ENCODE measurements at regions of chr4 and their contacts with region 1.

Region 1: DNA sequence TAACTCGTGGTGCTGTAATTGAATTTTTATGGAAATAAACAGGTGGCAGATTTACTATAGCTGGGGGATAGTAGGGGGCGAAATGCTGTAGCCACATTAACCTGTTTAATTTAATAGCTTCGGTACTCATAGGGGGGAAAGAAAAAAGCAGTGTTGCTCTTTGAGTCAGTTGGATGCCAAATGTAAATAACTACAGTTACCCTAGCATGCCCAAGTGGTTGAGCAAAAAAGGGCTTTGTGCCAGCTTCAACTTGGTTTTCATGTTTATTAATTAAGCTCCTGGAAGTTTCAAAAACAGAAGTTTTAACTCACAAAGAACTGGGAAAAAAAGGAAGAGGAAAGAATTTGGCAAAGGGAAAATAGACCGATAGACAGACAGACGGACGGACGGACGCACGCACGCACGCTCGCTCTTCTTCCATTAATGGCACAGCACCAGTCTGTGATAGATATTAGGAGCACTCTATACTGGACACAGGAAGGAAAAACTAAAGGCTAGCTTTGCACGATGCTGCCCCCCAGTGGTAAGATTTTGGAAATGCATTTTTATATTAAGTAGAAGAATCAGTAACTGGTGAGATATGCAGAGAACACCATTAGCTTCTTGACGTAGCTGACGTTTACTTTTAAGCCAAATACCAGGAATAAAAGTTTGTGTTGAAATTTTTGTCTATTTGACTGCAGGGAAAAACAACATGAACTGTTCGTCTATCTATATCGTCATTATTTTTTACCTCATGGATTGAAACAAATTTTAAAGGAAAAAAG is 151.8 kb downstream of the SLC7A11 start:
- DNase-seq: peak; percentile 45
- ATAC-seq: no peak
- H3K4me3 Mint-ChIP-seq: no peak overlapping the region
- H3K27ac Mint-ChIP-seq: no peak overlapping the region
- H3K4me1 Mint-ChIP-seq: no peaks in the 10 kb centered on the region
- H3K27me3 Mint-ChIP-seq: peaks cover 5% of the 10 kb centered on the region

Region 2: GRCh38 chr4:137124278-137124932 is 965.9 kb before region 1 on chr4:
- CTCF ChIA-PET with region 1: interaction called, 10 read pairs
- POLR2A ChIA-PET with region 1: no interaction called
- intact Hi-C with region 1: loop called (anchors 2 to 10 kb)
- DNase-seq: no peak
- ATAC-seq: no peak
- H3K4me3 Mint-ChIP-seq: no peak overlapping the region
- H3K27ac Mint-ChIP-seq: no peak overlapping the region
- H3K4me1 Mint-ChIP-seq: no peaks in the 10 kb centered on the region
- H3K27me3 Mint-ChIP-seq: no peaks in the 10 kb centered on the region

Region 3: GRCh38 chr4:137735561-137736104 is 354.7 kb before region 1 on chr4:
- CTCF ChIA-PET with region 1: no interaction called
- POLR2A ChIA-PET with region 1: no interaction called
- intact Hi-C with region 1: loop called in 1 of 2 experiments (anchors 10 kb)
- DNase-seq: no peak
- ATAC-seq: no peak
- H3K4me3 Mint-ChIP-seq: no peak overlapping the region
- H3K27ac Mint-ChIP-seq: no peak overlapping the region
- H3K4me1 Mint-ChIP-seq: no peaks in the 10 kb centered on the region
- H3K27me3 Mint-ChIP-seq: no peaks in the 10 kb centered on the region

Region 4: GRCh38 chr4:137819964-137820383 is 270.4 kb before region 1 on chr4:
- CTCF ChIA-PET with region 1: interaction called, 4 read pairs
- POLR2A ChIA-PET with region 1: no interaction called
- intact Hi-C with region 1: loop called in 1 of 2 experiments (anchors 2 kb)
- DNase-seq: no peak
- ATAC-seq: peak; percentile 36
- H3K4me3 Mint-ChIP-seq: no peak overlapping the region
- H3K27ac Mint-ChIP-seq: no peak overlapping the region
- H3K4me1 Mint-ChIP-seq: no peaks in the 10 kb centered on the region
- H3K27me3 Mint-ChIP-seq: no peaks in the 10 kb centered on the region

Region 5: GRCh38 chr4:138035781-138036258 is 54.5 kb before region 1 on chr4:
- CTCF ChIA-PET with region 1: interaction called, 3 read pairs
- POLR2A ChIA-PET with region 1: no interaction called
- intact Hi-C with region 1: loop called in 1 of 2 experiments (anchors 1 kb)
- DNase-seq: peak; percentile 5
- ATAC-seq: peak; percentile 47
- H3K4me3 Mint-ChIP-seq: no peak overlapping the region
- H3K27ac Mint-ChIP-seq: no peak overlapping the region
- H3K4me1 Mint-ChIP-seq: no peaks in the 10 kb centered on the region
- H3K27me3 Mint-ChIP-seq: no peaks in the 10 kb centered on the region

Region 6: GRCh38 chr4:138870737-138871554 is 780.6 kb after region 1 on chr4:
- CTCF ChIA-PET with region 1: interaction called, 7 read pairs
- POLR2A ChIA-PET with region 1: no interaction called
- intact Hi-C with region 1: loop called in 1 of 2 experiments (anchors 2 kb)
- DNase-seq: peak; percentile 66
- ATAC-seq: peak; percentile 36
- H3K4me3 Mint-ChIP-seq: no peak overlapping the region
- H3K27ac Mint-ChIP-seq: no peak overlapping the region
- H3K4me1 Mint-ChIP-seq: no peaks in the 10 kb centered on the region
- H3K27me3 Mint-ChIP-seq: peaks cover 27% of the 10 kb centered on the region

Measured in activated CD4-positive, alpha-beta T cell treated with anti-CD3 and anti-CD28 coated beads for 36 hours (primary cell).